Naive thymus-derived CD4-positive, alpha-beta T cell (primary cell): ENCODE measurements at regions of chr12 and their contacts with region 1.

Region 1: GRCh38 chr12:27523642-27524493 is at the start of gene PPFIBP1:
- DNase-seq: peak; percentile 81 to 95 (median 88)
- ATAC-seq: peak; percentile 99
- H3K4me3 ChIP-seq: peak within 1 kb of the TSS; percentile 78
- H3K4me3 Mint-ChIP-seq: peak within 1 kb of the TSS; percentile 95 to 99 (median 98)
- H3K27ac ChIP-seq: peak within 1 kb of the TSS; percentile 82
- H3K27ac Mint-ChIP-seq: peak within 1 kb of the TSS; percentile 89 to 99 (median 98)
- H3K4me1 ChIP-seq: peaks cover 5 to 7% of the 10 kb centered on the region in 2 donors
- H3K4me1 Mint-ChIP-seq: peaks cover 12 to 43% (median 28%) of the 10 kb centered on the region in 7 donors
- H3K27me3 ChIP-seq: no peaks in the 10 kb centered on the region
- H3K27me3 Mint-ChIP-seq: peaks cover 0 to 39% (median 7%) of the 10 kb centered on the region in 5 donors
- total RNA-seq, gene PPFIBP1: 3.3 to 29.2 (median 7.5) TPM

Region 2: GRCh38 chr12:26113853-26114719 is 1409.8 kb before region 1 on chr12:
- CTCF ChIA-PET with region 1: no interaction called
- POLR2A ChIA-PET with region 1: no interaction called
- intact Hi-C with region 1: loop called in 1 of 2 experiments (anchors 10 kb)
- DNase-seq: peak; percentile 48 to 70 (median 65)
- ATAC-seq: peak; percentile 88
- H3K4me3 ChIP-seq: peak overlapping the region; percentile 53
- H3K4me3 Mint-ChIP-seq: peak overlapping the region; percentile 72 to 90 (median 82)
- H3K27ac ChIP-seq: peak overlapping the region; percentile 54
- H3K27ac Mint-ChIP-seq: peak overlapping the region in 7 of 9 donors; percentile 44 to 83 (median 63)
- H3K4me1 ChIP-seq: peaks cover 0 to 5% of the 10 kb centered on the region in 2 donors
- H3K4me1 Mint-ChIP-seq: peaks cover 5 to 14% (median 8%) of the 10 kb centered on the region in 7 donors
- H3K27me3 ChIP-seq: no peaks in the 10 kb centered on the region
- H3K27me3 Mint-ChIP-seq: peaks cover 2 to 80% (median 32%) of the 10 kb centered on the region in 5 donors

Region 3: DNA sequence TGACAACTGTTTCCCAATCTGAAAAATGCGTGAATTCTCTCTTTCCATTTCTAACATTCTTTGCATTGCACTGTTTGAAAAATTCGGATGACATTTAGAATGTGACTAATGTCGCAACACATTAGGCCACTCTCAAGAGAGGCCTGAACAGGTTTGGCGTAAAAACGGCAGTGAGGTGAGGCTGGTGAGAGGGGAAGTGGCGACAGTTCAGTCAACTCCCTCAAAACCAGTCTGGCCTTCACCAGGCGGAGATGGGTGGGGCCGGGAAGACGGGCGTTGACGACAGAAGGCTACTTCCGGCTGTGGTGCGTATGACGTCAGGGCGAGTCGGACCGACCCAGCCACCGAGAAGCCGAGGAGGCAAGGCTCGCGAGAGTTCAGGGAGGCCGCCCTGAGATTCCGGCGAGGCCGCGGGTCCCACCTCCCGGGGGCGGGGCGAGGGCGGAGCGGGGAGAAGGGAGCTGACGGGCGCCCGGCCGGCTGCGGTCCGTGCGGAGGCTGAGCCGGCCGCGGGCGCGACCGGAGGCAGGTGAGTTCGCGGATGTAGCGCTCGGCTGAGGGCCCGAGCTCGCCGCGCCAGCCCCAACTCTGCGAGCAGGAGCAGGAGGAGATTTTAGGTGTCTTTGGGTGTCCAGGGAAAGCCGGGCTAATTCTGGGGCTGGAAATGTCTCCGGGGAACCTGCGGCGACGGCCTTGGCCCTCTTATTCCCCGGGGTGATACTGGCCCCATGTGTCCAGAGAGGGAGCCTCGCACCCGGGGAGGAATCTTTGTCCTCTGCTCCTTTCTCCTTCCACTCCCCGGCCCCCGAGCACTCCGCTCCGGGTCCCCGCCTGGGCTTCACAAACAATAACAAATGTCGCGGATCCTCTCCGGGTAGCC is 279.8 kb before region 1 on chr12 and contains the start of gene STK38L:
- CTCF ChIA-PET with region 1: no interaction called
- POLR2A ChIA-PET with region 1: no interaction called
- intact Hi-C with region 1: loop called (anchors 1 to 5 kb)
- DNase-seq: peak; percentile 94 to 98 (median 96)
- ATAC-seq: peak; percentile 98
- H3K4me3 ChIP-seq: peak within 1 kb of the TSS; percentile 84
- H3K4me3 Mint-ChIP-seq: peak within 1 kb of the TSS; percentile 97 to 100 (median 99)
- H3K27ac ChIP-seq: peak within 1 kb of the TSS; percentile 82
- H3K27ac Mint-ChIP-seq: peak within 1 kb of the TSS; percentile 92 to 99 (median 97)
- H3K4me1 ChIP-seq: peaks cover 12 to 13% of the 10 kb centered on the region in 2 donors
- H3K4me1 Mint-ChIP-seq: peaks cover 17 to 62% (median 51%) of the 10 kb centered on the region in 7 donors
- H3K27me3 ChIP-seq: no peaks in the 10 kb centered on the region
- H3K27me3 Mint-ChIP-seq: no peaks in the 10 kb centered on the region
- total RNA-seq, gene STK38L: 16.2 to 22.8 (median 21.2) TPM

Region 4: GRCh38 chr12:27498149-27498548 is 25.7 kb before region 1 on chr12:
- CTCF ChIA-PET with region 1: no interaction called
- POLR2A ChIA-PET with region 1: no interaction called
- intact Hi-C with region 1: loop called in 1 of 2 experiments (anchors 1 kb)
- DNase-seq: no peak
- ATAC-seq: no peak
- H3K4me3 ChIP-seq: no peak overlapping the region
- H3K4me3 Mint-ChIP-seq: peak overlapping the region in 1 of 10 donors; percentile 26
- H3K27ac ChIP-seq: no peak overlapping the region
- H3K27ac Mint-ChIP-seq: peak overlapping the region in 1 of 9 donors; percentile 67
- H3K4me1 ChIP-seq: no peaks in the 10 kb centered on the region
- H3K4me1 Mint-ChIP-seq: peaks cover 0 to 39% (median 11%) of the 10 kb centered on the region in 7 donors
- H3K27me3 ChIP-seq: no peaks in the 10 kb centered on the region
- H3K27me3 Mint-ChIP-seq: peaks cover 0 to 24% (median 10%) of the 10 kb centered on the region in 5 donors

Region 5: GRCh38 chr12:27652174-27652763 is 128.4 kb after region 1 on chr12:
- CTCF ChIA-PET with region 1: no interaction called
- POLR2A ChIA-PET with region 1: no interaction called
- intact Hi-C with region 1: loop called in 1 of 2 experiments (anchors 1 kb)
- DNase-seq: peak in 6 of 9 donors; percentile 26 to 53 (median 32)
- ATAC-seq: peak; percentile 65
- H3K4me3 ChIP-seq: no peak overlapping the region
- H3K4me3 Mint-ChIP-seq: no peak overlapping the region
- H3K27ac ChIP-seq: no peak overlapping the region
- H3K27ac Mint-ChIP-seq: no peak overlapping the region
- H3K4me1 ChIP-seq: no peaks in the 10 kb centered on the region
- H3K4me1 Mint-ChIP-seq: peaks cover 0 to 24% (median 0%) of the 10 kb centered on the region in 7 donors
- H3K27me3 ChIP-seq: no peaks in the 10 kb centered on the region
- H3K27me3 Mint-ChIP-seq: no peaks in the 10 kb centered on the region

Region 6: GRCh38 chr12:27807063-27807703 is 283.3 kb after region 1 on chr12:
- CTCF ChIA-PET with region 1: no interaction called
- POLR2A ChIA-PET with region 1: no interaction called
- intact Hi-C with region 1: loop called in 1 of 2 experiments (anchors 5 kb)
- DNase-seq: peak in 3 of 9 donors; percentile 10 to 14 (median 13)
- ATAC-seq: peak; percentile 36
- H3K4me3 ChIP-seq: no peak overlapping the region
- H3K4me3 Mint-ChIP-seq: peak overlapping the region; percentile 1 to 87 (median 74)
- H3K27ac ChIP-seq: peak overlapping the region; percentile 46
- H3K27ac Mint-ChIP-seq: peak overlapping the region; percentile 20 to 95 (median 86)
- H3K4me1 ChIP-seq: no peaks in the 10 kb centered on the region
- H3K4me1 Mint-ChIP-seq: peaks cover 7 to 47% (median 24%) of the 10 kb centered on the region in 7 donors
- H3K27me3 ChIP-seq: no peaks in the 10 kb centered on the region
- H3K27me3 Mint-ChIP-seq: peaks cover 0 to 18% (median 0%) of the 10 kb centered on the region in 5 donors